ENCODE measurements at regions of chr4 and their contacts with region 1.

Region 1: GRCh38 chr4:81844717-81845116 is 373.0 kb upstream of the RASGEF1B start:
- DNase-seq: peak; percentile 57 to 83
- ATAC-seq: peak; percentile 92 to 99 (median 97)
- H3K4me3 ChIP-seq: no peak overlapping the region
- H3K4me3 Mint-ChIP-seq: no peak overlapping the region
- H3K27ac ChIP-seq: no peak overlapping the region
- H3K27ac Mint-ChIP-seq: no peak overlapping the region
- H3K4me1 ChIP-seq: no peaks in the 10 kb centered on the region
- H3K4me1 Mint-ChIP-seq: no peaks in the 10 kb centered on the region
- H3K27me3 ChIP-seq: no peaks in the 10 kb centered on the region
- H3K27me3 Mint-ChIP-seq: peaks cover 7 to 23% of the 10 kb centered on the region in 2 donors
- CTCF ChIP-seq: peak; percentile 85

Region 2: GRCh38 chr4:82268050-82268825 is 423.5 kb after region 1 on chr4:
- intact Hi-C with region 1: loop called (anchors 10 kb)
- DNase-seq: peak in 1 of 2 donors; percentile 75
- ATAC-seq: peak; percentile 86 to 97 (median 90)
- H3K4me3 ChIP-seq: no peak overlapping the region
- H3K4me3 Mint-ChIP-seq: no peak overlapping the region
- H3K27ac ChIP-seq: no peak overlapping the region
- H3K27ac Mint-ChIP-seq: peak overlapping the region in 1 of 2 donors; percentile 61
- H3K4me1 ChIP-seq: peaks cover 12% of the 10 kb centered on the region
- H3K4me1 Mint-ChIP-seq: peaks cover 6 to 20% of the 10 kb centered on the region in 2 donors
- H3K27me3 ChIP-seq: no peaks in the 10 kb centered on the region
- H3K27me3 Mint-ChIP-seq: no peaks in the 10 kb centered on the region
- CTCF ChIP-seq: peak; percentile 66

Measured in natural killer cell (primary cell).